ENCODE measurements at regions of chr11 and their contacts with region 1.

Region 1: DNA sequence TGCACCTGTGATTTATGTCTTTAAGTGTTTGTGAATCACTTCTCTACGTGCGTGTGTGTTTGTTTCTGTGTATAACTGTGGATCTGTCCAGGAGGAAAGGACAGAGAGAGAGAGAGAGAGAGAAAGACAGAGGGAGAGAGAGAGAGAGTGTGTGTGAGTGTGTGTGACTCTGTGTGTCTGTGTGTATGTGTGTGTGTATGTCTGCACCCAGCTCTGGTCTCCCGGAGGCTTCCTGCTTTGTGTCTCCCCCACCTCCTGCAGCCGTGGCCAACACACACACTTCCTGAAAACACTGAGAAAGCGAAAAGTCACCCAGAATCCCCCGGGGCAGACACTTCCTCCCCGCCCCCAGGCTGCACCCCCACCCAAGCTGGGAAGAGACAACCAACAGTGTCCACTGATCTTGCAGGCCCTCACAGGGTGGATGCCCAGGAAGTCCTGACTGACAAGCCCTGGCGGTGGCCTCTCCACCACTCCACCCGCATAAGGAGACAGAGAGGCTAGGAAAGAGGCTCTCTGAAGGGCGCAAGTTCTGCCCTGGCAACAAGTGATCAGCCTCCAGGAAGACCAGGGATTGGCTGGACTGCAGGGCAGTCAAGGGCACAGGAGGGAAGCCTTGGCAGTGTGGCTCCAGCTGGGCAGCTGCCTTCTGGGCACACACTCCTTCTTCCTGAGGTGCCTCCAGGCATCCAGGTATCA is 30.0 kb downstream of the ARAP1 start:
- DNase-seq: peak; percentile 89
- ATAC-seq: peak; percentile 91
- H3K4me3 Mint-ChIP-seq: peak overlapping the region; percentile 92
- H3K27ac Mint-ChIP-seq: peak overlapping the region; percentile 96
- H3K4me1 Mint-ChIP-seq: peaks cover 48% of the 10 kb centered on the region
- H3K27me3 Mint-ChIP-seq: no peaks in the 10 kb centered on the region

Region 2: GRCh38 chr11:72736452-72737069 is 14.4 kb after region 1 on chr11:
- CTCF ChIA-PET with region 1: interaction called, 12 read pairs
- POLR2A ChIA-PET with region 1: interaction called, 10 read pairs
- intact Hi-C with region 1: loop called in 1 of 2 experiments (anchors 1 kb)
- DNase-seq: peak; percentile 84
- ATAC-seq: peak; percentile 92
- H3K4me3 Mint-ChIP-seq: peak overlapping the region; percentile 54
- H3K27ac Mint-ChIP-seq: peak overlapping the region; percentile 94
- H3K4me1 Mint-ChIP-seq: peaks cover 54% of the 10 kb centered on the region
- H3K27me3 Mint-ChIP-seq: no peaks in the 10 kb centered on the region

Region 3: GRCh38 chr11:72793425-72794367 is 71.5 kb after region 1 on chr11 and contains the start of gene STARD10:
- CTCF ChIA-PET with region 1: interaction called, 60 read pairs
- POLR2A ChIA-PET with region 1: interaction called, 6 read pairs
- intact Hi-C with region 1: loop called (anchors 1 kb)
- DNase-seq: peak; percentile 97
- ATAC-seq: peak; percentile 93
- H3K4me3 Mint-ChIP-seq: peak within 1 kb of the TSS; percentile 84
- H3K27ac Mint-ChIP-seq: peak within 1 kb of the TSS; percentile 99
- H3K4me1 Mint-ChIP-seq: peaks cover 21% of the 10 kb centered on the region
- H3K27me3 Mint-ChIP-seq: no peaks in the 10 kb centered on the region
- total RNA-seq, gene STARD10: 8.3 to 12.9 TPM

Region 4: DNA sequence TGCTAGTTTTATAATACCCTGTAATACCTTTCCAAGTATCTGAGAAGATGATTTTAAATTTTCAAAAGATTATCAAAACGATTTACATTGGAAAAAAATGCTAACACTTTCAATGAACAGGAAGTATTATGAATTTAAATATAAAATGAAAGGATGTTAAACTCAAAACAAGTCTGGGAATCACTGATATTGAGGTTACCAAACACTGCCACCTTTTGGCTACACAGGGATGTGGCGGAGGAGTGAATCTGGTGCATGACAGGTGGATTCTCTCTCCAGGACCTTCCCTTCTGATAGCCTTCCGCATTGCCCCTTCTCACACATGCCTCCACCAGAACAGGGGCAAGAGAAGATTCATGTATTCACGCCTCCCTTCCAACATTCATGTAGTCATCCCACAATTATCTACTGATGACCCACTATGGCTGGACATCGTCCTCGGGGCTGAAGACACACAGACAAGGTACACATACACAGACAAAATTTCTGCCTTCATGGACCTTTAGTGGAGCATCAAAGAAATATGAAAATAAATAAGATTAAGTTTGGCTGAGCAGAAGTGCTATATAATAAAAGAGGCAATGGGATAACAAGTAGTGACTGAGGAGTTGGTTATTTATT is 126.8 kb after region 1 on chr11:
- CTCF ChIA-PET with region 1: interaction called, 10 read pairs
- POLR2A ChIA-PET with region 1: no interaction called
- intact Hi-C with region 1: loop called (anchors 1 kb)
- DNase-seq: peak; percentile 62
- ATAC-seq: peak; percentile 71
- H3K4me3 Mint-ChIP-seq: no peak overlapping the region
- H3K27ac Mint-ChIP-seq: no peak overlapping the region
- H3K4me1 Mint-ChIP-seq: peaks cover 3% of the 10 kb centered on the region
- H3K27me3 Mint-ChIP-seq: no peaks in the 10 kb centered on the region

Region 5: GRCh38 chr11:73177778-73178577 is 455.8 kb after region 1 on chr11:
- CTCF ChIA-PET with region 1: interaction called, 21 read pairs
- POLR2A ChIA-PET with region 1: no interaction called
- intact Hi-C with region 1: loop called (anchors 1 to 5 kb)
- DNase-seq: peak; percentile 89
- ATAC-seq: peak; percentile 100
- H3K4me3 Mint-ChIP-seq: no peak overlapping the region
- H3K27ac Mint-ChIP-seq: no peak overlapping the region
- H3K4me1 Mint-ChIP-seq: no peaks in the 10 kb centered on the region
- H3K27me3 Mint-ChIP-seq: no peaks in the 10 kb centered on the region

Measured in activated CD4-positive, alpha-beta T cell treated with anti-CD3 and anti-CD28 coated beads for 36 hours (primary cell).